OCI-LY7 (cell line): ENCODE measurements at regions of chr4 and their contacts with region 1.

Region 1: DNA sequence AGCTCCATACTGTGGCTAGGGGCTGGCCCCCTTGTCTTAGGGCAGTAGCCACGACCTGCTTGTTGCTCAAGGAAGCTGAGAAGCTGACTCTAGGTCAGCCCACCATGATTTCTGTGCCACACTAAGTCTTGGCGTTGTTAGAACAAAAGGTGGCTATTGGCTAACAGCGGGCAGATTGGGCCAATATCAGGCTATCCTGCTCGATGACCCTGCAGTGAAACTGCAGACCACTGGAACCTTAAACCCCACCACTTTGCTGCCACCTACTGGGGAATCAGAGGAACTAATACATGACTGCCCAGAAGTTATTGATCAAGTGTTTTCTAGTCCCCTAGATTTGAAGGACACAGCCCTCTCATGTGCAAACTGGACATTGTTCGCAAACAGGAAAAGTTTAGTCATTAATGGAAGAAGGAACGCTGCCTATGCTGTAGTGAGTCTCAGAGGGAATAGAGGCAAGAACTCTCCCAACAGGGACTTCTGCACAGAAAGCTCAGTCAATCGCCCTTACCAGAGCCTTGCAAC is 17.0 kb upstream of the PAPSS1 start:
- DNase-seq: peak; percentile 63
- H3K4me3 ChIP-seq: no peak overlapping the region
- H3K27ac ChIP-seq: no peak overlapping the region
- H3K4me1 ChIP-seq: no peaks in the 10 kb centered on the region
- CTCF ChIP-seq: peak; percentile 91

Region 2: DNA sequence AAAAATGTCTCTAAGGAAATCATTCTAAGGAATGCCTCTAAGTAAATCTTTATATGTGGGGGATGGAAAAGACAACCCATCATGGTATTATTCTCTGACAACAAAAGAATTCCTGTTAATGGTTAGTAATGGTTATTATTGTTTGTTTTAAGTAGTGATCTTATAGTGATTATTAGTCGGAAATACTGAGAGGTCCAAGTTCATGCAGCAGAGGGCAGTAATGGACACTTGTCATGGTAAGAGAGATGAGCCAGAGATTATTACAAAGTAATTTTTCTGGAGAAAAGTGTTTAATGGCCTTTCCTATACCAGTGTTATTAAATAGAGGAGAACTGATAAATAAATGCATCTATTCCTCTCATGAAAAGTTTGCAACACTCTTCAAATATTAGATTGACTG is 692.8 kb before region 1 on chr4:
- CTCF ChIA-PET with region 1: no interaction called
- POLR2A ChIA-PET with region 1: no interaction called
- intact Hi-C with region 1: loop called (anchors 5 kb)
- DNase-seq: peak; percentile 1
- H3K4me3 ChIP-seq: no peak overlapping the region
- H3K27ac ChIP-seq: no peak overlapping the region
- H3K4me1 ChIP-seq: no peaks in the 10 kb centered on the region
- CTCF ChIP-seq: peak; percentile 57

Region 3: DNA sequence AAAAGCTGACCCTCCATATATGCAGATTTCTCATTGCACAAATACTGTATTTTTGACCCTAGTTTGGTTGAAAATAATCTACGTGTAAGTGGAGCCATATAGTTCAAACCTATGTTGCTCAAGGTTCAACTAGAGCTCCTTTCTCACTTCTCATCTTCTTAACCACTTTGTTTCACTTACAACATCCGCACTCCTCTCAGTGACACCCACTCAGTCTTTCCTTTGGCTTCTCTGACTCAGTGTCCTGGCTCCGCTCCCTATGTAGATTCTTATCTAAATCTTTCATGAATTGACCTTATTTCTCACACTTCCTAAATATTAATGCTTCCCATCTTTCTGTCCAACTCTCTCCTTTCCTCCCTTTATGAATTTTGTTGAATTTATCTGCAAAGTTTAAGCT is 667.9 kb before region 1 on chr4:
- CTCF ChIA-PET with region 1: no interaction called
- POLR2A ChIA-PET with region 1: no interaction called
- intact Hi-C with region 1: no loop called
- DNase-seq: no peak
- H3K4me3 ChIP-seq: no peak overlapping the region
- H3K27ac ChIP-seq: no peak overlapping the region
- H3K4me1 ChIP-seq: no peaks in the 10 kb centered on the region
- CTCF ChIP-seq: no peak

Region 4: GRCh38 chr4:107579099-107579498 is 157.9 kb before region 1 on chr4:
- CTCF ChIA-PET with region 1: no interaction called
- POLR2A ChIA-PET with region 1: no interaction called
- intact Hi-C with region 1: loop called (anchors 10 kb)
- DNase-seq: no peak
- H3K4me3 ChIP-seq: no peak overlapping the region
- H3K27ac ChIP-seq: no peak overlapping the region
- H3K4me1 ChIP-seq: no peaks in the 10 kb centered on the region
- CTCF ChIP-seq: no peak

Region 5: GRCh38 chr4:107600436-107600835 is 136.6 kb before region 1 on chr4:
- CTCF ChIA-PET with region 1: no interaction called
- POLR2A ChIA-PET with region 1: no interaction called
- intact Hi-C with region 1: loop called (anchors 10 kb)
- DNase-seq: no peak
- H3K4me3 ChIP-seq: no peak overlapping the region
- H3K27ac ChIP-seq: no peak overlapping the region
- H3K4me1 ChIP-seq: no peaks in the 10 kb centered on the region
- CTCF ChIP-seq: no peak

Region 6: DNA sequence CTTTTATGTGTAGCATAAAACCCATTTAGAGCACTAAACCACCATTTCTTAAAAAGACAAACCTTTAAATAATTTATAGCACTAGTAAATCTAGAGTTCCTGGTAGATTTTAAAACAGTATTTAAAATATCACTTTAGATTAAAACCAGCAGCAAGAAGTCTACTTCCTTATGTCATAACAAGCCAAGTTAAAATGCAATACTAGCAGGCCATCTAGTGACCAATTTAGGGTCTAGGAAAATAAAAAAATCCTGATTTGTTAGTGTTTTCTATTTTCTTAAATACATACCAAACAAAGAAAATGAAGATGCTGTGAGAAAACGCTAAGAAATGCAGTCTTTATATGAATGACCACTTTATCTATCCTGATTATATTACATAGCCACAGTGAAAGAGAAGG is 70.9 kb before region 1 on chr4:
- CTCF ChIA-PET with region 1: no interaction called
- POLR2A ChIA-PET with region 1: no interaction called
- intact Hi-C with region 1: no loop called
- DNase-seq: peak; percentile 8
- H3K4me3 ChIP-seq: no peak overlapping the region
- H3K27ac ChIP-seq: no peak overlapping the region
- H3K4me1 ChIP-seq: no peaks in the 10 kb centered on the region
- CTCF ChIP-seq: peak; percentile 45

Region 7: DNA sequence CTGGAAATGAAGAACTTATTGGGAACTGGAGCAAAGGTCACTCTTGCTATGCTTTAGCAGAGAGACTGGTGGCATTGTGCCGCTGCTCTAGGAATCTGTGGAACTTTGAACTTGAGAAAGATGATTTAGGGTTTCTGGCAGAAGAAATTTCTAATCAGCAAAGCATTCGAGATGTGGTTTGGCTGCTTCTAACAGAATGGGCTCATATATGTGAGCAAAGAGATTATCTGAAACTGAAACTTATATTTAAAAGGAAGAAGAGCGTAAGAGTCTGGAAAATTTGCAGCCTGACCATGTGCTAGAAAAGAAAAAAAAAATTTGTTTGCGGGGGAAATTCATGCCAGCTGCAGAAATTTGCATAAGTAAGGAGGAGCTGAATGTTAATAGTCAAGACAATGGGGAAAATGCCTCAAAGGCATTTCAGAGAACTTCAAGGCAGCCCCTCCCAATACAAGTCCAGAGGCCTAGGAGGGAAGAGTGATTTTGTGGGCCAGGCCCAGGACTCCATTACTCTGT is 18.9 kb after region 1 on chr4:
- CTCF ChIA-PET with region 1: no interaction called
- POLR2A ChIA-PET with region 1: no interaction called
- intact Hi-C with region 1: no loop called
- DNase-seq: no peak
- H3K4me3 ChIP-seq: no peak overlapping the region
- H3K27ac ChIP-seq: no peak overlapping the region
- H3K4me1 ChIP-seq: no peaks in the 10 kb centered on the region
- CTCF ChIP-seq: no peak